ENCODE measurements at regions of chr1 and their contacts with region 1.

Region 1: DNA sequence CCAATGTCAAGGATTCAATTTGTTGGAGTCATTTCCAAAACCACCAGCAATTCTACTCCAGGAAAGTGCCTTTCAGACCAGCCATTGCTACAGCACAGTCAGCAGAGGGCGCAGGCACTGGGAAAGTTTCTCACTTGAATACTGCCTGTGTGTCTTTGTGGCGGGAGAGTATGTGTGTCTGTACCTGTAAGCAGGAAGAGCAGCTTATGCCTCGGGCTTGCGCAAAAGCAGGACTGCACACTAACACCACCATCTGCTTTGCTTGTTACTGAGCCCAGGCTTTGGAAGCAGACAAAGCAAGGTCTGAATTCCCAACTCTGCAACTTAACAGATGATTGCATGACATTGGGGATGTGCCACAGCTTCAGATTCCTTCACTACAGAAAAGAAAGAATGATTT is 7.0 kb upstream of the CTSE start:
- DNase-seq: peak; percentile 81 to 85 (median 85)
- H3K4me3 ChIP-seq: peak overlapping the region in 1 of 7 experiments; percentile 35
- H3K27ac ChIP-seq: no peak overlapping the region
- H3K4me1 ChIP-seq: peaks cover 9 to 46% (median 33%) of the 10 kb centered on the region in 4 experiments
- H3K27me3 ChIP-seq: no peaks in the 10 kb centered on the region

Region 2: DNA sequence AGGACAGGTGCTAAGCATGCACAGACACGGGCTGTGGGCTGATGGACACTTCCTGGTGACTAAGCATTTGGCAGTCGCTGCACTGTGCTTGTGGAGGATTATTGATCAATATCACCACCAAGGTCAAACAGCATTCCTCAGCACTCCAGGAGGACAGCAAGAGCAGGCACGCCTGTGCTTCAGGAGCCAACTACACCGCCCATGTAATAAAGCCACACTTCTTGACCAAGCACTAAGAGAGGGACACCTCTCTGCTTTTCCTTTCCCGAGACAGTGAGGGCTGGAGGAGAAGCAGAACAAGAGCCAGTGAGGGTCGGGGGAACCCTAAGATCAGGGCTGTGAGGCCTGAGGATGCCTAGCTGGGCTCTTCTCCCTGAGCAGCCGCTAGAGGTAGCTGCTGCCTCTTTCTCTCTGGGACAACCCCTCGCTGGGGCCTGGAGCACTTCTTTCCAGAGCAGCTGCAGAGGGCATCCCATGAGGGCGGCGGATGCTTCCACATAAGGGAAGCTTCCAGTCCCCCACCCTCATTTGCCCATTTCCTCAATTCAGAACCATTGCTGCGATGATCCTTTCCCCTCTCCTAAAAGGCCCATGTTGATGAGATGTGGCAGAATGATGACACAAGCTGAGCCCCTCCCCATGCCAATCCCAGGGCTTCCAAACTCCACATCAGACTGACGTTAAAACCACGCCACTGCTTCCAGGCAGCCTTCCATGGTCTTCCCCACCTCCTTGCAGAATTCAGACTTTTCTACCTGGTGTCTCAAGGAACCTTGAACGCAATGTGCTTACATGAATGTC is 46.6 kb before region 1 on chr1:
- CTCF ChIA-PET with region 1: interaction called, 49 read pairs
- POLR2A ChIA-PET with region 1: no interaction called
- DNase-seq: peak; percentile 46 to 59 (median 53)
- H3K4me3 ChIP-seq: no peak overlapping the region
- H3K27ac ChIP-seq: no peak overlapping the region
- H3K4me1 ChIP-seq: peaks cover 0 to 14% (median 7%) of the 10 kb centered on the region in 4 experiments
- H3K27me3 ChIP-seq: no peaks in the 10 kb centered on the region

Region 3: DNA sequence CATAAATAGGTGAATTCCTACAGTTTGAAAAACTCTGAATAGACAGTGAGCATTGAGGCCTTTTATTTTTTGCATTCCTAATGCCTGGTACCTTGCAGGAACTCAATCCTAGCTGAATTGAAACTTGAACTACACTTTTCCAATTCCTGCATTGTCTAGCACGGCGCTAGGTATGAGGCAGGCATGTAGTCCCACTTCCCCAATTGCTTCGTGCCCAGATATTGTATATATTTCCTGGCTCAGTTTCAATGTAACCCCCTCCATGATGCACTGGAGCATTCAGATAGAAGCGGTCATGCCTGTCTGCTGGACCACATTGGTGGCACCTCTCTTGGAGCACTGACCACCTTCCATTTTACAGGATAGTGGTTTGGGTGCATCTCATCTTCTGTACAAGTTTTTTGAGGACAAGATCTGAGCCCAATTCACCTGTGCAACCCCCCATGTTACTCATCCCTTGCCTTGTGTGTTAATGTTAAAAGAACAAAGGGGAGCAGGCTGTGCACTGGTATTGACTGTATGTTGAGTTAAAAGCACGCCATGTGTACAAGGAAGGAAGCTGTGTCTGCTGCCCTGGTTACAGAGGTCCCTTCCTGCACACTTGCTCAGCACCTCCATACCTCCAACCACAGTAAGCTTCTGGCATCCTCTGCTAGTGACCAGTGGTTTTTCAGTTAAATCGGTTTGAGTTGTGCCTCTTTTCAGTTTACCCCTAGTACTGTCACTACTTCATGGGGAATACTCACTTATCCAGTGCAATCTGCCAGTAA is 17.5 kb before region 1 on chr1:
- CTCF ChIA-PET with region 1: interaction called, 12 read pairs
- POLR2A ChIA-PET with region 1: no interaction called
- DNase-seq: peak in 2 of 3 donors; percentile 61 to 74
- H3K4me3 ChIP-seq: peak overlapping the region in 2 of 7 experiments; percentile 17 to 21
- H3K27ac ChIP-seq: peak overlapping the region in 1 of 2 experiments; percentile 12
- H3K4me1 ChIP-seq: peaks cover 18 to 55% (median 36%) of the 10 kb centered on the region in 4 experiments
- H3K27me3 ChIP-seq: no peaks in the 10 kb centered on the region

Region 4: DNA sequence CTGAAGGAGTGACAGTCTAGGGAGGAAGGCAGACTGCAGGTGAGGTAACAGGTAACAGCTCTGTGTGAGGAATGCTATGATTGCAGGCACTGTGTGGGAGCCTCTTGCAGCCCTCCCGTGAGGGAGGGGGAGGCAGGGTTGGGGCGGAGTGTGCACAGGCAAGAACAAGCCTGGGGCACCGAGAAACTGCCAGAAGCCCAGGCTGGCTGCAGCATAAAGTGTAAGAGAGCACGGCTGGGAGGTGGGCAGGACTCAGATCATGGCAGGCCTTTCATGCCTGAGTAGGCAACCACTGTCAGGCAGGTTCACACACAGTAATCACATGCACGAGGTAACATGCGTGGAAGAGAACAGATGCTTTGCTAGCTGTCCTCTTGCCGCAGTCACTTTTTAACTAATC is 10.9 kb after region 1 on chr1:
- CTCF ChIA-PET with region 1: interaction called, 73 read pairs
- POLR2A ChIA-PET with region 1: no interaction called
- DNase-seq: no peak
- H3K4me3 ChIP-seq: no peak overlapping the region
- H3K27ac ChIP-seq: no peak overlapping the region
- H3K4me1 ChIP-seq: peaks cover 7 to 34% (median 31%) of the 10 kb centered on the region in 4 experiments
- H3K27me3 ChIP-seq: no peaks in the 10 kb centered on the region

Region 5: DNA sequence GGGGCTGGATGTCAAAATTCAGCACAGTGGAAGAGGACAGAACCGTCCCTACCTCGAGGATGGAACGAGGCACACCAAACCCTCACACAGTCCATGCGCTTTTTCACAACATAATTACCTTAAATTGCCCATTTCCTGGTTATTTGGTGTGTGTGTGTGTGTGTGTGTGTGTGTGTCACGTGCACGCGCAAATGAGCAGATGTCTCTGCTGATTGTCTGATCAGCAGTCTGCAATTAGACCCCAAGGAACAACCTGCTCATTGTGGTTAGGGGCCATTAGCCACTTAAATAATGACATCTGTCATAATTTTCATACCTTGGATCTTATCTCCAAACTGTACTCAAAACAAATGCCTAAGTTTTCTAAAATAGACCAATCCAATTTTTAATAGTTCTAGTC is 63.3 kb after region 1 on chr1:
- CTCF ChIA-PET with region 1: interaction called, 14 read pairs
- POLR2A ChIA-PET with region 1: no interaction called
- DNase-seq: peak; percentile 74 to 98 (median 95)
- H3K4me3 ChIP-seq: no peak overlapping the region
- H3K27ac ChIP-seq: peak overlapping the region; percentile 65 to 67
- H3K4me1 ChIP-seq: peaks cover 16 to 72% (median 49%) of the 10 kb centered on the region in 4 experiments
- H3K27me3 ChIP-seq: no peaks in the 10 kb centered on the region

Region 6: GRCh38 chr1:206106328-206107167 is 75.8 kb after region 1 on chr1:
- CTCF ChIA-PET with region 1: interaction called, 222 read pairs
- POLR2A ChIA-PET with region 1: interaction called, 3 read pairs
- DNase-seq: peak; percentile 80 to 89 (median 83)
- H3K4me3 ChIP-seq: no peak overlapping the region
- H3K27ac ChIP-seq: no peak overlapping the region
- H3K4me1 ChIP-seq: peaks cover 12 to 42% (median 27%) of the 10 kb centered on the region in 4 experiments
- H3K27me3 ChIP-seq: no peaks in the 10 kb centered on the region

Region 7: GRCh38 chr1:206117151-206117948 is 86.6 kb after region 1 on chr1 and contains the start of gene AVPR1B:
- CTCF ChIA-PET with region 1: interaction called, 222 read pairs
- POLR2A ChIA-PET with region 1: no interaction called
- DNase-seq: peak in 2 of 3 donors; percentile 78 to 90
- H3K4me3 ChIP-seq: peak within 1 kb of the TSS; percentile 33 to 81 (median 59)
- H3K27ac ChIP-seq: no peak within 1 kb of the TSS
- H3K4me1 ChIP-seq: peaks cover 6 to 57% (median 39%) of the 10 kb centered on the region in 4 experiments
- H3K27me3 ChIP-seq: peaks cover 0 to 5% (median 0%) of the 10 kb centered on the region in 5 experiments